ENCODE measurements at regions of chr4 and their contacts with region 1.

Region 1: DNA sequence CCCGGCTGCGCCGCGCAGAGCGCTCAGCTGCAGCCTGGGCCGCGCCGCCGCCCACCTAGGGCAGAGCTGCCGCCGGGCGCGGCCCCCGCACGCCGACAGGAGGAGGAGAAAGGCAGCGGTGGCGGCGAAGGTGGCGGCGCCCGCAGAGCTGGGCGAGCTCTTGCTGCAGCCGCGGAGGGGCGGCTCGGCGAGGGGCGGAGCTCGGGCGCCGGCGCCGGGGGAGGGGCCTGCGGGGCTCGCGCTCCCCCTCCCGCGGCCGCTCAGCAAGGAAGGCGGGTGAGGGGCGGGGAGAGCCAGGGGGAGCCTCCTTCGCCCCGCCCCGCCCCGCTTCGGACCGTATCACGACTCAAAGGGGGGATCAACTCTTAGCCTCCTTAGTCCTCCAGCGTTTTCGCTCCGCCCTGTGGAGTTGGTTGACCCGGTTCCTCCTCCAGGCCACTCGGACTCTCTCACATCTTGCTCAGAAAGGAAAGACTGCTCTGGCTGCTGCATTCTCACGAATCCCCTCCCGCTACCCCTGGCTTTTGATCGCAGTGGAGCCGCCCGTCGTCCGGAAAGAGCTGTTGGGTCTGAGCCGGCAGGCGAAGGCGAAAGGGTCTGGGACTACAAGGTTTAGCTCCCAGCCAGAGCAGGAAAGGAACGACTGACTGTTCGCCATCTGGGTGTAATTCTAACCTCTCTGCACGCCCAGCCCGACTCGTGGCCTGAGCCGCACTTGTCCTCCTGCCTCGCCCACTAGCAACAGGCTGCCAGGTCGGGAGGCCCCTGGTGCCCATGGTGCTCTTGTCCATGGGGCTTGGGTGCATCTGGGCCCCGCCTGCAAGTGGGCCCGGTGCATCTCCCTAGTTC is at the start of gene ATP8A1:
- DNase-seq: peak; percentile 96
- ATAC-seq: peak; percentile 92
- H3K4me3 ChIP-seq: peak within 1 kb of the TSS; percentile 85 to 99 (median 94)
- H3K4me3 Mint-ChIP-seq: peak within 1 kb of the TSS; percentile 99
- H3K27ac ChIP-seq: peak within 1 kb of the TSS; percentile 90 to 92
- H3K27ac Mint-ChIP-seq: peak within 1 kb of the TSS; percentile 100
- H3K4me1 ChIP-seq: peaks cover 21 to 26% of the 10 kb centered on the region in 2 donors
- H3K4me1 Mint-ChIP-seq: peaks cover 45% of the 10 kb centered on the region
- H3K27me3 ChIP-seq: no peaks in the 10 kb centered on the region
- H3K27me3 Mint-ChIP-seq: no peaks in the 10 kb centered on the region
- CTCF ChIP-seq: no peak
- total RNA-seq, gene ATP8A1: 51.8 and 54.3 TPM in 2 replicates

Region 2: DNA sequence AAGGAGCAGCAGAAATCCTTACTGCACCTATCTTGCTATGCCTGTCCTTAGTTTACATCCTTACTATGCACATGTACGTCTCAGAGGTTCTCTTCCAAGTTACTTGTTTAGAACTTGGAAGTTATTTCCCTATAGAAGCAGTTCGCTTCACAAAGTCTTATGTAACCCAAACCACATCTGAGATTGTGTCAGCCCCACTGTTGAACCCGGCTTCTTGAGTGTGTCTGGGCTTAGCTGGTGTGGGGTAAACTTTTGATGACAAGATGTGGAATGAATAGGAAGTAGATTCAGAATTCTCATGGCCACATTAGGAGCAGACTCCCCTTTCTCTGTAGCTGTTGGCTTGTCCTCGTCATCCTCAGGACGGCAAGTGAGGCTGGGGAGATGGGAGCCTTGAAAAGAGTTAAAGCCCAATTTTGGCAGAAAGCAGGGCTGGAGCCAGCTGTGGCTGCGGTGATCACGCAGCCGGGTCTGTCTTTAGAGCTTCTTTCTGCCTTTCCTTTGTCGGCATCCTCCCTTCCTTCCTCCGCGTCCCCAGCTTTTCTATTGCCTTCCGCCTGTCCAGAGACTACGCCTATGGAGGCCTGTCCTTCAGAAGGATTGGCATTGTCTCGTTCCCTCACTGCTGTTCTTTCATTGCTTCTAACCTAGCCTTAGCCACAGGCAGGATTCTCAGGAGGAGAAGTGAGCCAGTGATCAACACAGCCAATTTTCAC is 1142.2 kb before region 1 on chr4:
- CTCF ChIA-PET with region 1: no interaction called
- POLR2A ChIA-PET with region 1: no interaction called
- intact Hi-C with region 1: no loop called
- DNase-seq: no peak
- ATAC-seq: no peak
- H3K4me3 ChIP-seq: no peak overlapping the region
- H3K4me3 Mint-ChIP-seq: no peak overlapping the region
- H3K27ac ChIP-seq: no peak overlapping the region
- H3K27ac Mint-ChIP-seq: no peak overlapping the region
- H3K4me1 ChIP-seq: no peaks in the 10 kb centered on the region
- H3K4me1 Mint-ChIP-seq: no peaks in the 10 kb centered on the region
- H3K27me3 ChIP-seq: no peaks in the 10 kb centered on the region
- H3K27me3 Mint-ChIP-seq: no peaks in the 10 kb centered on the region
- CTCF ChIP-seq: no peak

Region 3: DNA sequence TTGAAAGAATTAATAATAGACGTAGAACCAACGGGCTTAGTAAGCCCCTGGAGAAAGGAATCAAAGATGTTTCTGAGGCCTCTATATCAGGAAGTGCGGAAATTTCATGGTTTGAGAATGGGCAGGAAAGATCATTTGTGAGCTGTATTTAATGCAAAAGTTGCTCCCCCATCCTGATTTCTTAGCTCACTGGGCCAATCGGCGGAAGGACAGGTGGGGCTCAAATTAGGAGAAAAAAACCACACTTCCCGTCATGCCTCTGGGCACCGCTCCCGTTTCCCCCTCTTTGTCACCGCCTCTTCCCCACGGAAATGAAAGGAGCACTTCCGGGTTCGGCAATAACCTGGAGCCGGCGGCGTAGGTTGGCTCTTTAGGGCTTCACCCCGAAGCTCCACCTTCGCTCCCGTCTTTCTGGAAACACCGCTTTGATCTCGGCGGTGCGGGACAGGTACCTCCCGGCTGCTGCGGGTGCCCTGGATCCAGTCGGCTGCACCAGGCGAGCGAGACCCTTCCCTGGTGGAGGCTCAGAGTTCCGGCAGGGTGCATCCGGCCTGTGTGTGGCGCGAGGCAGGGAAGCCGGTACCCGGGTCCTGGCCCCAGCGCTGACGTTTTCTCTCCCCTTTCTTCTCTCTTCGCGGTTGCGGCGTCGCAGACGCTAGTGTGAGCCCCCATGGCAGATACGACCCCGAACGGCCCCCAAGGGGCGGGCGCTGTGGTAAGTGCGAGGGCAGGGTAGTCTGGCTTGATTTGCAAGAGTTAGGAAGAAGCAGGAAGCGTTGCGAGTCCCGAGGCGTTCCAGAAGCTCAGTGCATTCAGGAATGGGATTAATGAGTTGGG is 722.1 kb before region 1 on chr4 and contains the start of gene TMEM33:
- CTCF ChIA-PET with region 1: no interaction called
- POLR2A ChIA-PET with region 1: no interaction called
- intact Hi-C with region 1: loop called (anchors 5 kb)
- DNase-seq: peak; percentile 85
- ATAC-seq: peak; percentile 92
- H3K4me3 ChIP-seq: peak within 1 kb of the TSS; percentile 66 to 99 (median 85)
- H3K4me3 Mint-ChIP-seq: peak within 1 kb of the TSS; percentile 90
- H3K27ac ChIP-seq: peak within 1 kb of the TSS; percentile 57 to 79
- H3K27ac Mint-ChIP-seq: peak within 1 kb of the TSS; percentile 79
- H3K4me1 ChIP-seq: peaks cover 11 to 19% of the 10 kb centered on the region in 2 donors
- H3K4me1 Mint-ChIP-seq: peaks cover 34% of the 10 kb centered on the region
- H3K27me3 ChIP-seq: no peaks in the 10 kb centered on the region
- H3K27me3 Mint-ChIP-seq: no peaks in the 10 kb centered on the region
- CTCF ChIP-seq: no peak
- total RNA-seq, gene TMEM33: 36.9 and 39.2 TPM in 2 replicates

Region 4: DNA sequence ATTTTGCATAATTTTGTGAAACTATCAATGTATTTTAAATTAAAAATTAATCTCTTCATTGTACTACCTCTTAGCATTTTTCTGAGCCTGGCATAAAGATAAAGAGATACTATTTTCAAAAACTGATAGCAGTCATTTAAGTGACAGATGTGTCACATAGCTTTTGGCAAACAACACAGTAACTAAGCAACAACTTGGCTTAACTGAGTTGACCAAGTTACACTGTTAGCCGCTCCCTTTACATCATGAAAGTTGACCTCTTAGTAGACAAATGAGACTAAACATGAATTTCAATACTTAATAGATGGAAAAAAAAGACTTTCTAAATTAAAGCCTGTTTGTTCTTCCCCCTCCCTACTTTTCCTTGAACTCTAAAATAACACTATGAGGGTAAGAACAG is 62.3 kb before region 1 on chr4:
- CTCF ChIA-PET with region 1: interaction called, 6 read pairs
- POLR2A ChIA-PET with region 1: no interaction called
- intact Hi-C with region 1: loop called (anchors 2 kb)
- DNase-seq: no peak
- ATAC-seq: no peak
- H3K4me3 ChIP-seq: no peak overlapping the region
- H3K4me3 Mint-ChIP-seq: no peak overlapping the region
- H3K27ac ChIP-seq: no peak overlapping the region
- H3K27ac Mint-ChIP-seq: no peak overlapping the region
- H3K4me1 ChIP-seq: peaks cover 0 to 7% of the 10 kb centered on the region in 2 donors
- H3K4me1 Mint-ChIP-seq: peaks cover 4% of the 10 kb centered on the region
- H3K27me3 ChIP-seq: no peaks in the 10 kb centered on the region
- H3K27me3 Mint-ChIP-seq: no peaks in the 10 kb centered on the region
- CTCF ChIP-seq: no peak

Region 5: GRCh38 chr4:42627885-42628646 is 29.1 kb before region 1 on chr4:
- CTCF ChIA-PET with region 1: interaction called, 21 read pairs
- POLR2A ChIA-PET with region 1: interaction called, 25 read pairs
- intact Hi-C with region 1: loop called (anchors 1 kb)
- DNase-seq: peak; percentile 88
- ATAC-seq: peak; percentile 87
- H3K4me3 ChIP-seq: peak overlapping the region in 3 of 5 experiments; percentile 5 to 23 (median 15)
- H3K4me3 Mint-ChIP-seq: peak overlapping the region; percentile 84
- H3K27ac ChIP-seq: peak overlapping the region; percentile 78 to 79
- H3K27ac Mint-ChIP-seq: peak overlapping the region; percentile 97
- H3K4me1 ChIP-seq: peaks cover 69 to 81% of the 10 kb centered on the region in 2 donors
- H3K4me1 Mint-ChIP-seq: peaks cover 78% of the 10 kb centered on the region
- H3K27me3 ChIP-seq: no peaks in the 10 kb centered on the region
- H3K27me3 Mint-ChIP-seq: no peaks in the 10 kb centered on the region
- CTCF ChIP-seq: no peak

Region 6: DNA sequence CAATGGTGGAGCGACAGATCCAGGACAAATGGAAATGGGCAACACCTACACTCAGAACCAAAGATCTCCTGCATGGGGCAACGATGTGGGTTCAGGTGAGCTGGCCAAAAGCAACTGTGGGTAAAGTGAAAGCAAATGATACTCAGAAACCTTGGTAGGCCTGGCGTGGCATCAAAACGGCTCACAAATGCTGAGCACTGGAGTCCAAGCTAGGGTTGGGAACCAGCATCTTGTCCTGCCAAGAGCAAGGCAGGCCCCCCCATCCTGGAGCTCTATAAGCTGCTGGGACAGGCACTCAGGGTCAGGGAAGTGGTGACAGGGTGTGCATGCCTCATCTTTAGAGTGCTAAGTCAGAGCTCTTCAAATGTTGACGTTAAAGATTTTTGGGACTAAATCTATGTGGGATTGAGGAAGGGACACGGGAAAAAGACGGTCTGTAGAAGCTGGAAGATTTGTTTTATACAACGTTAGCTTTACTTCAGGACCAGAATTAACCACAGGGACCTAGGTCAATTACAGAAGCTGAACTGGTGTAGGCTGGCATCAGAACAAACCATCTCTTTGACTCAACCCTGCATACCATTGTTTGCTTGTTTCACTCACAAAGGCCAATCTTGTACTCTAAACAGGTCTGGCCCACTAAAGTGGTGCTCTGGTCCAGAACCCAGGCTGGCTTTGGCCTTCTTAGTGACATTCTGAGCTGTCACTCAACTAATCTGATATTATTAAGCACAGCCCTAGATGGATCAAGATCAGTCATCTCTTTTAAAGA is 11.0 kb before region 1 on chr4:
- CTCF ChIA-PET with region 1: interaction called, 18 read pairs
- POLR2A ChIA-PET with region 1: interaction called, 23 read pairs
- intact Hi-C with region 1: loop called (anchors 1 kb)
- DNase-seq: no peak
- ATAC-seq: no peak
- H3K4me3 ChIP-seq: peak overlapping the region in 1 of 5 experiments; percentile 12
- H3K4me3 Mint-ChIP-seq: peak overlapping the region; percentile 46
- H3K27ac ChIP-seq: peak overlapping the region in 1 of 2 donors; percentile 88
- H3K27ac Mint-ChIP-seq: peak overlapping the region; percentile 68
- H3K4me1 ChIP-seq: peaks cover 46 to 50% of the 10 kb centered on the region in 2 donors
- H3K4me1 Mint-ChIP-seq: peaks cover 76% of the 10 kb centered on the region
- H3K27me3 ChIP-seq: no peaks in the 10 kb centered on the region
- H3K27me3 Mint-ChIP-seq: no peaks in the 10 kb centered on the region
- CTCF ChIP-seq: no peak

Measured in B cell (primary cell).